ENCODE measurements at regions of chr1 and their contacts with region 1.

Region 1: DNA sequence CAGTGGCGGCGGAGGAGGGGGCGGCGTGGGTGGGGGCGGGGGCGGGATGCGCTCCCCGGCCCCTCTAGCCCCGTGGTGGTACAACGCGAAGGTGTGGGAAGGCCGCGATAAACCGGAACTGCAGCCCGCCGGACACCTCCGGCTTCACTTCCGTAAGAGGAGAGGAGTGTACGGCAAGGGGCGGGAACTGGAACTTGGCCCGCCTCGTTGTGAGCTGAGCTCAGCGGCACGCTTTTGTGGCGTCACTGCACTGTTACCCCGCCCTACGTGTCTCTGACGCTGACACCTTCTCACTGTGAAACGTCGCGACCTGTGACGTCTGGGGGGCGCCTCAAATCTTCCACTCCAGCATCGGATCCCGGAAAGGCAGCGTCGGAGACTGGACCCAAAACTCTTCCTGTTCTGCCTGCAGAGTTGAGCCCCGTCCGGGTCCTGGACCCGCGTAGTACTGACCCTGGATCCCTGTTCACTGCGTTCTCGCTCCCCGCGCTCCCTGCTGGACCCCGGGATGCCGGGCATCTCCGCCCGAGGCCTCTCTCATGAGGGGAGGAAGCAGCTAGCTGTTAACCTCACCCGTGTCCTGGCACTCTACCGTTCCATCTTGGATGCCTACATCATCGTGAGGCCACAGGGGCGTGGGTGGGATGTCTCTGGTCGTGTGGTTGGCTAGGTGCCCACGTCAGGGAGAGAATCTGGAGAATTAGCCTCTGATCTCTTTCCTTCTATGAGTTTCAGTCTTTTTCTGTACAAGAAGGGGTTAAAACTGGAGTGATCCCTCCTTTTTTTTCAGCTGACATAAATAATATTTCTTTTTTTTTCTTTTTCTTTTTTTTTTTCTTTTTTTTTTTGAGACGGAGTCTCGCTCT is at the start of gene ISG20L2:
- DNase-seq: peak; percentile 97
- ATAC-seq: peak; percentile 94 to 96
- H3K4me3 ChIP-seq: peak within 1 kb of the TSS; percentile 68 to 94 (median 84)
- H3K27ac ChIP-seq: peak within 1 kb of the TSS; percentile 91 to 98 (median 94)
- H3K4me1 ChIP-seq: peaks cover 35 to 37% of the 10 kb centered on the region in 2 donors
- H3K27me3 ChIP-seq: no peaks in the 10 kb centered on the region
- CTCF ChIP-seq: no peak
- POLR2A ChIP-seq: peak; percentile 14 to 48
- total RNA-seq, gene ISG20L2: 9.5 to 16.4 (median 15.1) TPM

Region 2: DNA sequence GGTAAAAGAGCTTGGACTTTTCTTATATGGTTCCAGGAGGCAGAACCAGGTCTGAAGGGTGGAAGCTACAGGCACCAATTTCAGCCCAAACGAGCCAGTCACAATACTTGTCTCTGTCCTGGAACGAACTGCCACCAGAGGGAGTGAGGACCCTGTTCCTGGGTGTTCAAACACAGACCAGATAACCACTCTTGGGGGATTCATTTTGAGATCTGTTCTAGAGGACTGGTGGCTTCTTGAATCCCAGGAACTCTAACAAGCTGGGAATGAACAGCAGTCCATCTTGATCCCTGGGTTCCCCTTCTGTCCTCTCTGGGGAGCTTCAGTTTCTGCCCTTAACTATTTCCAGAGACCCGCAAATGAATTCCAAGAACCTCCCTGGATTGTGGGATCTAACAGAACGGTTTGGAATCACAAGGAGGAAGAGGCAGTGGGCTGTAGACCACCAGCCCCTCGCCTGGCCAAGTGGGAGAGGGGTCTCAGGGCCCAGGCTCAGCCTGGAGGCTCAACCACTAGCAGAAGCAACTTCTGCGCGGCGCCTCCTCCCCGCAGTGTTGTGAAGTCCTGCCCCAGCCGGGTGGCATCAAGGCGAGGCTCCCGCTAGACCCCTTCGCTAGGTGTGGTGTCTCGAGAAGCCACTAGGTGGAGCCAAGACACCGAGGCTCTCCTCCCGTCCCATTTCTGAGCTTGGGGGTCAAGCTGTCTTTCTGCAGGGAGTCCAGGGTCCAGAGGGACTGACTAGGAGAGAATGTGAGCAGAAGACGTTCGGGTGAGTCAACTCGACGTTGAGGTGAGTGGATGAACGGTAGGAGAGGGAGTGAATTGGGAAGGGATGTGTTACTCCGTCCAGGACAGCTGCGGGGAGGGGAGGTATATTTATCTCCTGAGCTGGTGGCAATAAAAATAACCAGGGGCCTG is 39.5 kb before region 1 on chr1:
- in situ Hi-C with region 1: loop called in 1 of 4 experiments (anchors 5 kb)
- intact Hi-C with region 1: loop called (anchors 1 kb)
- DNase-seq: peak; percentile 38 to 72
- ATAC-seq: peak; percentile 83 to 88
- H3K4me3 ChIP-seq: peak overlapping the region; percentile 20 to 36 (median 32)
- H3K27ac ChIP-seq: peak overlapping the region in 3 of 4 donors; percentile 29 to 64 (median 64)
- H3K4me1 ChIP-seq: peaks cover 9 to 13% of the 10 kb centered on the region in 2 donors
- H3K27me3 ChIP-seq: peaks cover 0 to 2% (median 0%) of the 10 kb centered on the region in 3 donors
- CTCF ChIP-seq: peak; percentile 92 to 95 (median 93)
- POLR2A ChIP-seq: no peak

Region 3: GRCh38 chr1:156751758-156752757 is 23.2 kb after region 1 on chr1:
- in situ Hi-C with region 1: no loop called
- intact Hi-C with region 1: loop called (anchors 1 kb)
- DNase-seq: peak; percentile 99
- ATAC-seq: peak; percentile 57 to 63
- H3K4me3 ChIP-seq: peak overlapping the region; percentile 86 to 100 (median 96)
- H3K27ac ChIP-seq: peak overlapping the region; percentile 94 to 100 (median 100)
- H3K4me1 ChIP-seq: peaks cover 46 to 55% of the 10 kb centered on the region in 2 donors
- H3K27me3 ChIP-seq: no peaks in the 10 kb centered on the region
- CTCF ChIP-seq: no peak
- POLR2A ChIP-seq: peak; percentile 79 to 88

Region 4: GRCh38 chr1:156767101-156767878 is 38.5 kb after region 1 on chr1 and contains the start of gene PRCC:
- in situ Hi-C with region 1: no loop called
- intact Hi-C with region 1: loop called (anchors 1 kb)
- DNase-seq: peak; percentile 99
- ATAC-seq: peak; percentile 96
- H3K4me3 ChIP-seq: peak within 1 kb of the TSS; percentile 76 to 98 (median 90)
- H3K27ac ChIP-seq: peak within 1 kb of the TSS; percentile 87 to 98 (median 94)
- H3K4me1 ChIP-seq: peaks cover 35 to 40% of the 10 kb centered on the region in 2 donors
- H3K27me3 ChIP-seq: no peaks in the 10 kb centered on the region
- CTCF ChIP-seq: peak in 1 of 5 experiments; percentile 14
- POLR2A ChIP-seq: peak; percentile 74 to 84
- total RNA-seq, gene PRCC: 42.8 to 62.3 (median 46.5) TPM